Transverse colon (tissue), 4 donors: ENCODE measurements at regions of chr1 and their contacts with region 1.

Region 1: DNA sequence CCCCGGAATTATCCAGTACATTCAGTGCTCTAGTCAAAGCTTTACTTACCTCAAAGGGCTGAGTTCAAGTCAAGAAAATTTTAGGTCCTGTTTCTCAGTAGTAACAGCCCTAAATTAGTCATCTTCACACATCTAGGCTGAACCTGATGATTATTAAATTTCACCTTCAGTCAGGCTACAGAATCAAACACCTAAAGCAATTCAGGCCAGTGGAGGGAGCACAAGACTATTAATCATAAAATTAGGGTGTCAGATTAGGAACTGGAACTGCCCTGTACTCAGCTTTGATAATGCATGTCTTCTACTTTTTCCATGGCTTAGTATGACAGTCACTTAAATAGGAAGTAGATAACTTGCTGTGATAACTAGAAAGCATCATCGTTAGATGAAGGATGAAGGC is 28.4 kb upstream of the BCAS2 start:
- DNase-seq: no peak
- H3K4me3 ChIP-seq: no peak overlapping the region
- H3K27ac ChIP-seq: no peak overlapping the region
- H3K4me1 ChIP-seq: no peaks in the 10 kb centered on the region
- H3K27me3 ChIP-seq: no peaks in the 10 kb centered on the region
- CTCF ChIP-seq: no peak
- EP300 ChIP-seq: no peak
- POLR2A ChIP-seq: no peak

Region 2: GRCh38 chr1:114595602-114596001 is 14.2 kb before region 1 on chr1:
- in situ Hi-C with region 1: no loop called
- intact Hi-C with region 1: loop called (anchors 1 kb)
- DNase-seq: no peak
- H3K4me3 ChIP-seq: no peak overlapping the region
- H3K27ac ChIP-seq: no peak overlapping the region
- H3K4me1 ChIP-seq: no peaks in the 10 kb centered on the region
- H3K27me3 ChIP-seq: no peaks in the 10 kb centered on the region
- CTCF ChIP-seq: no peak
- EP300 ChIP-seq: no peak
- POLR2A ChIP-seq: no peak

Region 3: GRCh38 chr1:114677691-114678090 is 67.9 kb after region 1 on chr1:
- in situ Hi-C with region 1: no loop called
- intact Hi-C with region 1: no loop called
- DNase-seq: no peak
- H3K4me3 ChIP-seq: no peak overlapping the region
- H3K27ac ChIP-seq: no peak overlapping the region
- H3K4me1 ChIP-seq: no peaks in the 10 kb centered on the region
- H3K27me3 ChIP-seq: no peaks in the 10 kb centered on the region
- CTCF ChIP-seq: no peak
- EP300 ChIP-seq: no peak
- POLR2A ChIP-seq: no peak